Naive thymus-derived CD4-positive, alpha-beta T cell (primary cell): ENCODE measurements at regions of chr11 and their contacts with region 1.

Region 1: DNA sequence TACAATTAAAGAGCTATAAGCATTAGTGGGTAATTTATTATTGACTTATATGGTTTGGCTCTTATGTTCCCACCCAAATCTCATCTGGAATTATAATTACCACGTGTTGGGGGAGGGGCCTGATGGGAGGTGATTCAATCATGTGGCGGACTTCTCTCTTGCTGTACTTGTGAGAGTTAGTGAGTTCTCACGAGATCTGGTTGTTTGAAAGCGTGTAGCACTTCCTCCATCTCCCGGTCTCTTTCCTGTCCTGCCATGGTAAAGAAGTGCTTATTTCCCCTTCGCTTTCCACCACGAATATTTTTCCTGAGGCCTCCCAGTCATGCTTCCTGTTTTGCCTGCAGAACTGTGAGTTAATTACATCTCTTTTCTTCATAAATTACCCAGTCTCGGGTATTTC is 28.1 kb upstream of the CHORDC1 start:
- DNase-seq: peak in 1 of 9 donors; percentile 1
- ATAC-seq: peak; percentile 22
- H3K4me3 ChIP-seq: no peak overlapping the region
- H3K4me3 Mint-ChIP-seq: peak overlapping the region; percentile 28 to 89 (median 75)
- H3K27ac ChIP-seq: no peak overlapping the region
- H3K27ac Mint-ChIP-seq: peak overlapping the region in 3 of 9 donors; percentile 21 to 80 (median 31)
- H3K4me1 ChIP-seq: no peaks in the 10 kb centered on the region
- H3K4me1 Mint-ChIP-seq: peaks cover 5 to 20% (median 15%) of the 10 kb centered on the region in 7 donors
- H3K27me3 ChIP-seq: no peaks in the 10 kb centered on the region
- H3K27me3 Mint-ChIP-seq: peaks cover 0 to 8% (median 4%) of the 10 kb centered on the region in 5 donors

Region 2: GRCh38 chr11:90453525-90453924 is 202.6 kb after region 1 on chr11:
- CTCF ChIA-PET with region 1: no interaction called
- POLR2A ChIA-PET with region 1: no interaction called
- intact Hi-C with region 1: loop called in 1 of 2 experiments (anchors 5 kb)
- DNase-seq: no peak
- ATAC-seq: no peak
- H3K4me3 ChIP-seq: no peak overlapping the region
- H3K4me3 Mint-ChIP-seq: no peak overlapping the region
- H3K27ac ChIP-seq: no peak overlapping the region
- H3K27ac Mint-ChIP-seq: no peak overlapping the region
- H3K4me1 ChIP-seq: no peaks in the 10 kb centered on the region
- H3K4me1 Mint-ChIP-seq: no peaks in the 10 kb centered on the region
- H3K27me3 ChIP-seq: no peaks in the 10 kb centered on the region
- H3K27me3 Mint-ChIP-seq: peaks cover 0 to 5% (median 0%) of the 10 kb centered on the region in 5 donors

Region 3: DNA sequence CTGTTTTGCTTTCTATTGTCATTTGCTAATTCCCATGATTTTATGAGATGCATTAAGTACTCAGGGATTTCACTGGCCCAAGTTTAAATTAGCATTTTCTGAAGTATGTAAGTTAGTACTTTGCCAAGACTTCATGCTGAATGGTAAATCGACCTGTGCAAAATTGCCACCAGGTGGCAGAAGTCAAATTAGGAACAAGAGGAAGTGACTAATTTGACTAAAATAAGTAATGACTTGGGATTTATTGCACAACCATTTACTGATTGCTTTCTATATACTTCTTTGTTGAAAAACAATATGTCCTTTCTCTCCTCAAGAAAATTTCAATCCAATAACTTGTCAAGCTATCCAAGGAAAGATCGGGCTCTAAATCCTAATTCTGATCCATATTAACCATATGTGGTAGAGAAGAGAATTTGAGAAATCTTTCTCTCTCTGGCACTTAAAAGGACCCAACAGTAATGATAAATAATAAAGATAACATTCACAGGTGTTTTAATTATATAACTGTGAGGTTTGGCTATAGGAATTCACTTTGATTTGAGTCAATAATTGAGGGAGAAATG is 225.6 kb after region 1 on chr11:
- CTCF ChIA-PET with region 1: no interaction called
- POLR2A ChIA-PET with region 1: no interaction called
- intact Hi-C with region 1: no loop called
- DNase-seq: peak in 4 of 9 donors; percentile 2 to 8 (median 6)
- ATAC-seq: no peak
- H3K4me3 ChIP-seq: no peak overlapping the region
- H3K4me3 Mint-ChIP-seq: no peak overlapping the region
- H3K27ac ChIP-seq: no peak overlapping the region
- H3K27ac Mint-ChIP-seq: no peak overlapping the region
- H3K4me1 ChIP-seq: no peaks in the 10 kb centered on the region
- H3K4me1 Mint-ChIP-seq: no peaks in the 10 kb centered on the region
- H3K27me3 ChIP-seq: no peaks in the 10 kb centered on the region
- H3K27me3 Mint-ChIP-seq: peaks cover 0 to 13% (median 0%) of the 10 kb centered on the region in 5 donors

Region 4: GRCh38 chr11:91248199-91248807 is 997.3 kb after region 1 on chr11:
- CTCF ChIA-PET with region 1: no interaction called
- POLR2A ChIA-PET with region 1: no interaction called
- intact Hi-C with region 1: loop called in 1 of 2 experiments (anchors 2 kb)
- DNase-seq: no peak
- ATAC-seq: no peak
- H3K4me3 ChIP-seq: no peak overlapping the region
- H3K4me3 Mint-ChIP-seq: no peak overlapping the region
- H3K27ac ChIP-seq: no peak overlapping the region
- H3K27ac Mint-ChIP-seq: no peak overlapping the region
- H3K4me1 ChIP-seq: no peaks in the 10 kb centered on the region
- H3K4me1 Mint-ChIP-seq: no peaks in the 10 kb centered on the region
- H3K27me3 ChIP-seq: no peaks in the 10 kb centered on the region
- H3K27me3 Mint-ChIP-seq: no peaks in the 10 kb centered on the region